Pancreas (tissue), 10 donors: ENCODE measurements at regions of chr19 and their contacts with region 1.

Region 1: DNA sequence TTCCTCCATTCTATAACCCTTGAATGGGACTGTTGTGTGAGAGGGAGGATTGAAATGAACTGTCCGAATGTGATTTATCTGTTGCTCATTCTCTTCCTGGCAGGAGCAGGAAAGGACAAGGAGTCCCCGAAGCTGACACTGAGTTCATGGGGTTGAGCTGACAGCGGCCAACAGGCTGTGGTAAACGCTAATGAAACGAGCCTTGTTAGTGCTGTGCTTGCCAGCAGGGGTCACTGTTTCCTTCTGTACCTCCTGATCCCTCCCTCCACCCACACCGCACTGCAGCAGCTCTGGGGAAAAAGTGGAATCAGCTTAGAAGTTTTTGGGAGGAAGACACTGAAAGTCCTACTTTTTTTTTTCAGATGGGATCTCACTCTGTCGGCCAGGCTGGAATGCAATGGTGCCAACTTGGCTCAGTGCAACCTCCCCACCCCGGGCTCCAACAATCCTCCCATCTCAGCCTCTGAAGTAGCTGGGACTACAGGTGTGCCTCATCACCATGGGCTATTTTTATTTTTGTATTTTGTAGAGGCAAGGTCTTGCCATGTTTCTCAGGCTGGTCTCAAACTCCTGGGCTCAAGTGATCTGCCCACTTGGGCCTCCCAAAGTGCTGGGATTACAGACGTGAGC is 6.7 kb upstream of the ZNF761 start:
- DNase-seq: peak; percentile 59 to 78 (median 72)
- ATAC-seq: peak; percentile 84 to 100 (median 98)
- H3K4me3 ChIP-seq: no peak overlapping the region
- H3K27ac ChIP-seq: no peak overlapping the region
- H3K4me1 ChIP-seq: no peaks in the 10 kb centered on the region
- H3K27me3 ChIP-seq: no peaks in the 10 kb centered on the region
- CTCF ChIP-seq: peak; percentile 66 to 77 (median 73)

Region 2: GRCh38 chr19:53294786-53295441 is 130.2 kb before region 1 on chr19:
- intact Hi-C with region 1: no loop called
- DNase-seq: no peak
- ATAC-seq: no peak
- H3K4me3 ChIP-seq: no peak overlapping the region
- H3K27ac ChIP-seq: no peak overlapping the region
- H3K4me1 ChIP-seq: no peaks in the 10 kb centered on the region
- H3K27me3 ChIP-seq: no peaks in the 10 kb centered on the region
- CTCF ChIP-seq: no peak

Region 3: DNA sequence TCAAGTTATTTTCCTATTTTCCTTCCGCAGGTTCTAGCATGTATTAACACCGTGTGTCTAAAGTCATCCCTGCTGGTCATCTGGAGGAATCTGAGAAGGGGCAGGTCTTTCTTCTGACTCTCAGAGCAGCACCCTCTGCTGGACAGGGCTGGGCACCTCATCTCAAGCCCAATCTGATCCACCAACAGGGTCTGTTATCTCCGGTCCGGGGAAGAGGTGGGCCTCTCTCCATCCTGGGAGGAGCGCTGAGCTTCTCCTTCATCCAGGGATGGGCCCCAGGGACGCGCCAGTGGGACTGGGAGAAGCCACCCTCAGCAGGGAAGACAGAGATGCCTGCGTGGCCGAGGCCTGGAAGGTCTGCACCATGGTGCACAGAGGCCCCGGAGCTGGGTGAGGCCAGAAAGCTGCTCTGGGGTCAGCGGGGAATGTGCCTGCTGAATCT is 86.9 kb after region 1 on chr19:
- intact Hi-C with region 1: loop called in 1 of 3 experiments (anchors 5 kb)
- DNase-seq: peak; percentile 37 to 69 (median 57)
- ATAC-seq: peak; percentile 75 to 97 (median 93)
- H3K4me3 ChIP-seq: no peak overlapping the region
- H3K27ac ChIP-seq: no peak overlapping the region
- H3K4me1 ChIP-seq: no peaks in the 10 kb centered on the region
- H3K27me3 ChIP-seq: no peaks in the 10 kb centered on the region
- CTCF ChIP-seq: peak; percentile 25 to 61 (median 60)